PC-3 (cell line): ENCODE measurements at regions of chr2 and their contacts with region 1.

Region 1: GRCh38 chr2:237998530-237998929 is 31.7 kb downstream of the UBE2F start:
- DNase-seq: no peak
- ATAC-seq: no peak
- H3K4me3 ChIP-seq: no peak overlapping the region
- H3K27ac ChIP-seq: no peak overlapping the region
- H3K4me1 ChIP-seq: no peaks in the 10 kb centered on the region
- H3K27me3 ChIP-seq: no peaks in the 10 kb centered on the region
- CTCF ChIP-seq: no peak

Region 2: GRCh38 chr2:237939227-237939626 is 59.3 kb before region 1 on chr2:
- CTCF ChIA-PET with region 1: interaction called, 10 read pairs
- POLR2A ChIA-PET with region 1: no interaction called
- intact Hi-C with region 1: no loop called
- DNase-seq: no peak
- ATAC-seq: peak; percentile 46
- H3K4me3 ChIP-seq: no peak overlapping the region
- H3K27ac ChIP-seq: no peak overlapping the region
- H3K4me1 ChIP-seq: peaks cover 8% of the 10 kb centered on the region
- H3K27me3 ChIP-seq: no peaks in the 10 kb centered on the region
- CTCF ChIP-seq: no peak

Region 3: GRCh38 chr2:238152771-238153688 is 154.5 kb after region 1 on chr2:
- CTCF ChIA-PET with region 1: no interaction called
- POLR2A ChIA-PET with region 1: no interaction called
- intact Hi-C with region 1: no loop called
- DNase-seq: no peak
- ATAC-seq: no peak
- H3K4me3 ChIP-seq: no peak overlapping the region
- H3K27ac ChIP-seq: no peak overlapping the region
- H3K4me1 ChIP-seq: no peaks in the 10 kb centered on the region
- H3K27me3 ChIP-seq: no peaks in the 10 kb centered on the region
- CTCF ChIP-seq: peak; percentile 44; the same call in 1 of the 2 replicates